RWPE1 (cell line): ENCODE measurements at regions of chr10 and their contacts with region 1.

Region 1: GRCh38 chr10:63083904-63084689 is 49.0 kb upstream of the NRBF2 start:
- DNase-seq: peak; percentile 55
- H3K27ac ChIP-seq: no peak overlapping the region
- CTCF ChIP-seq: peak; percentile 79

Region 2: GRCh38 chr10:63068246-63068645 is 15.9 kb before region 1 on chr10:
- CTCF ChIA-PET with region 1: no interaction called
- POLR2A ChIA-PET with region 1: no interaction called
- DNase-seq: no peak
- H3K27ac ChIP-seq: no peak overlapping the region
- CTCF ChIP-seq: no peak

Region 3: GRCh38 chr10:63157845-63158624 is 73.9 kb after region 1 on chr10:
- CTCF ChIA-PET with region 1: interaction called, 13 read pairs
- POLR2A ChIA-PET with region 1: no interaction called
- DNase-seq: peak; percentile 64
- H3K27ac ChIP-seq: no peak overlapping the region
- CTCF ChIP-seq: peak; percentile 79